ENCODE measurements at regions of chr4 and their contacts with region 1.

Region 1: GRCh38 chr4:170259631-170260153 is 169.9 kb upstream of the AADAT start:
- DNase-seq: peak; percentile 92
- ATAC-seq: peak; percentile 100
- H3K4me3 ChIP-seq: no peak overlapping the region
- H3K27ac ChIP-seq: no peak overlapping the region
- H3K4me1 ChIP-seq: no peaks in the 10 kb centered on the region
- H3K27me3 ChIP-seq: no peaks in the 10 kb centered on the region
- CTCF ChIP-seq: peak; percentile 95
- EP300 ChIP-seq: no peak
- POLR2A ChIP-seq: no peak
- RAD21 ChIP-seq: peak; percentile 72

Region 2: GRCh38 chr4:170138580-170139194 is 121.0 kb before region 1 on chr4:
- CTCF ChIA-PET with region 1: interaction called, 6 read pairs
- POLR2A ChIA-PET with region 1: no interaction called
- in situ Hi-C with region 1: loop called (anchors 25 kb)
- intact Hi-C with region 1: loop called (anchors 1 kb)
- DNase-seq: peak; percentile 57
- ATAC-seq: peak; percentile 94
- H3K4me3 ChIP-seq: no peak overlapping the region
- H3K27ac ChIP-seq: no peak overlapping the region
- H3K4me1 ChIP-seq: no peaks in the 10 kb centered on the region
- H3K27me3 ChIP-seq: no peaks in the 10 kb centered on the region
- CTCF ChIP-seq: peak; percentile 89
- EP300 ChIP-seq: no peak
- POLR2A ChIP-seq: no peak
- RAD21 ChIP-seq: no peak

Region 3: GRCh38 chr4:170374770-170375169 is 115.1 kb after region 1 on chr4:
- CTCF ChIA-PET with region 1: interaction called, 19 read pairs
- POLR2A ChIA-PET with region 1: no interaction called
- in situ Hi-C with region 1: no loop called
- intact Hi-C with region 1: loop called (anchors 1 kb)
- DNase-seq: peak; percentile 39
- ATAC-seq: peak; percentile 93
- H3K4me3 ChIP-seq: no peak overlapping the region
- H3K27ac ChIP-seq: no peak overlapping the region
- H3K4me1 ChIP-seq: no peaks in the 10 kb centered on the region
- H3K27me3 ChIP-seq: no peaks in the 10 kb centered on the region
- CTCF ChIP-seq: peak; percentile 24; the same call in 1 of the 2 replicates
- EP300 ChIP-seq: no peak
- POLR2A ChIP-seq: no peak
- RAD21 ChIP-seq: no peak